Right ventricle myocardium inferior (tissue), 1 donor: ENCODE measurements at regions of chr2 and their contacts with region 1.

Region 1: GRCh38 chr2:198053776-198054698 is 249.6 kb downstream of the PLCL1 start:
- DNase-seq: no peak
- ATAC-seq: peak; percentile 42

Region 2: GRCh38 chr2:197975931-197976519 is 78.0 kb before region 1 on chr2:
- intact Hi-C with region 1: loop called (anchors 5 kb)
- DNase-seq: no peak
- ATAC-seq: peak; percentile 45

Region 3: GRCh38 chr2:197986977-197987376 is 67.1 kb before region 1 on chr2:
- intact Hi-C with region 1: no loop called
- DNase-seq: no peak
- ATAC-seq: no peak

Region 4: DNA sequence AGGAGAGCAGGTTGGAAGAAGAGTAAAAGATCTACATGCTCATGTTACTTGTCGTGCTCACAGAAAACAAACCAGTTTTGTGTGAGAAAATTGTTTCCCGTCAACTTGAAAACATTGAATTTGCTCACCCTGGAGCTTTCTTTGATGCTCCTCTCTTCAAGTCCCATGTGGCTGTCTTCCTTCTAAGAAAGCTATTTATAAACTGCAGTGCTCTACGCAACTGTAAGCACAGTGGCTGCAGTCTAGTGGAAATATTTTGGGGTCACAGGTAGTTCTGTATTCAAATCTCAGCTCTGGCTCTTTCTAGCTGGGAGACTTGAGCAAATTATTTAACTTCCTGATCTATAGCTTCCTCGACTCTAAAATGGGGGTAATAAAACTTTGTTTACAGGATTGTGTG is 37.8 kb before region 1 on chr2:
- intact Hi-C with region 1: no loop called
- DNase-seq: no peak
- ATAC-seq: no peak